Heart left ventricle (tissue), 16 donors: ENCODE measurements at regions of chr1 and their contacts with region 1.

Region 1: DNA sequence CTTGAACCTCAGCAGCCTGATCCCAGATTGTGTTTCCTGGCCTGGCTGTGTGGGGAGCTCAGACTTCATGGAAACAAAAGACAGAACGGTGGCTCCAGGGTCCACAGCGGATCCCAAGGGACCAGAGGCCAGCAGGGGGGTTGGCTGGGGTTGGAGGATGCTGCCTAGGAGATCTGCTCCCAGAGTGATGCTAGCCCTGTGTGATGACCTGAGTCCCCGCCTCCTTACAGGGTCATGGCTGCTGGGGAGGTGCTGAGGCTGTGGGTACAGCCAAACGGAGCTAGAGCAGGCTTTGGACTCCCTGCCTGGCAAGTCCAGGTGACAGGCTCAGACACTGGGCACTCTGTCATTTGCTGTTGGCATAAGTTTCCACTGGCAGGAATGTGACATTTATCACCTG is 11.5 kb upstream of the RUNX3 start:
- DNase-seq: no peak
- ATAC-seq: no peak
- H3K4me3 ChIP-seq: no peak overlapping the region
- H3K27ac ChIP-seq: no peak overlapping the region
- H3K4me1 ChIP-seq: no peaks in the 10 kb centered on the region
- H3K27me3 ChIP-seq: peaks cover 0 to 9% (median 0%) of the 10 kb centered on the region in 9 donors
- CTCF ChIP-seq: no peak
- POLR2A ChIP-seq: no peak

Region 2: DNA sequence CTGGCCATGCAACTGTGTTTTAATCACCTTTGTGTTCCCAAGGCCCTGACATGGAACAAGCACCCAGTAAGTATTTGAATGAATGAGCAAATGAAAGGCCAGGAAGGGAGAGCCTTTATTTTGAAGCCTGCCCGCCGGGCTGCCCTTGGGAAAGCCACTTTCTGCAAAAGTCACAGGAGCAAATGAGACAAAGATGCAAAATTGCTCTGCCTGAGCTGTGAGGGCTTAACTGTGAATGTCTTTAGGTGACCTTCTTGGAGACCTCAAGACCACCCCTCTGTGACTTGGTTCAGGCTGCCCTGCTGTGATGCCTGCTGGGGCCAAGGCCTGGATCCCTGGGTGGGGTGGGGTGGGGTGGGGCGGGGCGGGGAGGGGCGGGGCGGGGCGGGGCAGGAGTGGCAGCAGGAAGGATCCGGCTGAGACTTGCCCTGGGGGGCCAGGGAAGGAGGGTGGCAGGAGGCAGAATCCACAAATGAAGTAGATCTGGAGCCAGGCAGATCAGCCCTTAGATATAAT is 65.5 kb before region 1 on chr1:
- intact Hi-C with region 1: loop called in 1 of 10 experiments (anchors 2 kb)
- DNase-seq: no peak
- ATAC-seq: no peak
- H3K4me3 ChIP-seq: no peak overlapping the region
- H3K27ac ChIP-seq: no peak overlapping the region
- H3K4me1 ChIP-seq: peaks cover 0 to 12% (median 0%) of the 10 kb centered on the region in 12 donors
- H3K27me3 ChIP-seq: peaks cover 0 to 18% (median 4%) of the 10 kb centered on the region in 9 donors
- CTCF ChIP-seq: no peak
- POLR2A ChIP-seq: no peak

Region 3: GRCh38 chr1:24987875-24988557 is 46.5 kb after region 1 on chr1:
- intact Hi-C with region 1: no loop called
- DNase-seq: no peak
- ATAC-seq: no peak
- H3K4me3 ChIP-seq: no peak overlapping the region
- H3K27ac ChIP-seq: no peak overlapping the region
- H3K4me1 ChIP-seq: peaks cover 0 to 40% (median 0%) of the 10 kb centered on the region in 12 donors
- H3K27me3 ChIP-seq: peaks cover 0 to 38% (median 3%) of the 10 kb centered on the region in 9 donors
- CTCF ChIP-seq: no peak
- POLR2A ChIP-seq: no peak